ENCODE measurements at regions of chr18 and their contacts with region 1.

Region 1: DNA sequence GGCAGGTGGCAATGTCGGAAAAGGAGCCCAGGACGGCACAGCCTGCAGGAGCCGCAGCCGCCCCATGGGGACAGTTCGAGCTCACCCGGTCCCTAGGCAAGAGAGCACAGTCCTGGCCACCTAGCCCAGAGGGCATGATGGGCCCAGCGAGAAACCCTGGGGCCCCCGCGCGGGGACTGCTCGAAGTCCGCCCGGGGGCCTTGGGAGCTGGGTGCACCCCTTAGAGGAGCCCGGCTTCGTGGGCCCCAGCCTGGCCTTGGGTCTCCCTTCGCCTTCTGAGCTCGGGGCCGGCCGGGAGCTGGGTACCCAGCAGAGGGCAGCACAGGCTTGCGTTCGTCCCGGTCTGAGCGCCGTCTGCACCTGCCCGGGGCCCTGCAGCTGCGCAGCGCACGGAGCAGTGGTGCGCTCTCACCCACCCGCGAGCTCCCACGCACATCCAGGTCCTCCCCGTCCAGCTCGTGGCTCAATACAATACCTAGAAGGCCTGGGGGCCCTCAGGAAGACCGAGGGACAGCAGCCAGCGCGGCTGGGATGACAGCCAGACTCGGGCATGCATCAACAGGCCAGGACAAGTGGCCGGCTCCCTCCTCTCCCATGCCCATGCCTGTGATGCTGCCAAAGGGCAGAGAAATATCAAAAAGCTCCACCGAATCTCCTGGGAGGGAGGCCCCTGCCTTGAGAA is 96.2 kb upstream of the ZNF532 start:
- DNase-seq: peak; percentile 88
- CTCF ChIP-seq: peak; percentile 91

Region 2: DNA sequence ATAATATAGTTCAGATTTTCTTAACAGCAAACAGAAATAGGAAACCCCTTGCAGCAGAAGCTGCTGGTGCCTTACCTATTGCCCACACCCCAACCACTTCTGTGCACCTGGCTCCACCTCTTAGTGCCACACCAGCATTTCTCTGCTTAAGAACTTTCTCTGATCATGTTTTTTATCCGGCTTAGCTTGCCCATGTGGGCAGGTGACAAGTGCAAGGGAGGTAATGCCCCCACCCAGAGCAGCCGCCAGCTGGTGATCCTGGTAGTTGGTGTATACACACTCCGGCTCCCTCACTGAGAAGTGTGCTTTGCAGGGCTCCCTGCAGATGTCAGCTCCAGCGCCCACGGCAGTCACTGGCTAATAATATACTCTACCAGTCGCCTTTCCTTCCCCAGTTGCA is 265.8 kb before region 1 on chr18:
- CTCF ChIA-PET with region 1: interaction called, 60 read pairs
- POLR2A ChIA-PET with region 1: no interaction called
- DNase-seq: no peak
- CTCF ChIP-seq: no peak

Region 3: GRCh38 chr18:58671111-58671631 is 97.3 kb before region 1 on chr18 and contains the start of gene MALT1:
- CTCF ChIA-PET with region 1: interaction called, 14 read pairs
- POLR2A ChIA-PET with region 1: no interaction called
- DNase-seq: peak; percentile 95
- CTCF ChIP-seq: no peak

Region 4: GRCh38 chr18:58754544-58755068 is 13.8 kb before region 1 on chr18:
- CTCF ChIA-PET with region 1: interaction called, 103 read pairs
- POLR2A ChIA-PET with region 1: no interaction called
- DNase-seq: no peak
- CTCF ChIP-seq: no peak

Region 5: DNA sequence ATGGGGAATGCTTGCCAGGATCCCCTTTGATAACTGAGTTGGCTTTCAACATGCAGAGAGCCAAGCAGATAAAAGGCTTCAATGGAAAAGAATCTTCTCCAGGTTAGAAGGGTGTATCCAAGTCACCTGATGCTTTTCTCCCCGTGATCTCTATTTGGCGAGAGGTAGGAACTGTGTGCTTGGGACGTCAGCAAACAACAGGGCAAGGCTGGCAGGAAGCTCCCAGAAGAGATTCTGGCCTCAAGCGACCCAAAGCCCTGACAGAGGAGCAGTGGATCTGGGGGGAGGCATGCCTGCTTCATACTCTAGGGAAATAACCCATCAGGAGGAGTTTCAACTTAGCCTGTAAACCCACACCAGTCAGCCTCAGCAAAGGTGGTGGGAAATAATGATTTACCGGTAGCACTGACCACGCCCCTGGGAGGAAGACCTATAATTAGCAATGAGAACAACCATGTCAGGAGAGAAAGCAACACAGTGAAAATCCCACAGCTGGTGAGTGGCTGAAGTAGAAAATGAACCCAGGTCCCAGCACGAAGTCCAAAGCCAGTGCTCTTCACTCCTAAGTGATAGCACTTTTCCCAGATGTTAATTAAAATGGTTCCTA is 295.0 kb after region 1 on chr18:
- CTCF ChIA-PET with region 1: interaction called, 371 read pairs
- POLR2A ChIA-PET with region 1: no interaction called
- DNase-seq: peak; percentile 35
- CTCF ChIP-seq: no peak

Region 6: GRCh38 chr18:59861963-59862819 is 1093.8 kb after region 1 on chr18:
- CTCF ChIA-PET with region 1: no interaction called
- POLR2A ChIA-PET with region 1: no interaction called
- DNase-seq: no peak
- CTCF ChIP-seq: no peak

Measured in GM10248 (cell line).